ENCODE measurements at regions of chr10 and their contacts with region 1.

Region 1: DNA sequence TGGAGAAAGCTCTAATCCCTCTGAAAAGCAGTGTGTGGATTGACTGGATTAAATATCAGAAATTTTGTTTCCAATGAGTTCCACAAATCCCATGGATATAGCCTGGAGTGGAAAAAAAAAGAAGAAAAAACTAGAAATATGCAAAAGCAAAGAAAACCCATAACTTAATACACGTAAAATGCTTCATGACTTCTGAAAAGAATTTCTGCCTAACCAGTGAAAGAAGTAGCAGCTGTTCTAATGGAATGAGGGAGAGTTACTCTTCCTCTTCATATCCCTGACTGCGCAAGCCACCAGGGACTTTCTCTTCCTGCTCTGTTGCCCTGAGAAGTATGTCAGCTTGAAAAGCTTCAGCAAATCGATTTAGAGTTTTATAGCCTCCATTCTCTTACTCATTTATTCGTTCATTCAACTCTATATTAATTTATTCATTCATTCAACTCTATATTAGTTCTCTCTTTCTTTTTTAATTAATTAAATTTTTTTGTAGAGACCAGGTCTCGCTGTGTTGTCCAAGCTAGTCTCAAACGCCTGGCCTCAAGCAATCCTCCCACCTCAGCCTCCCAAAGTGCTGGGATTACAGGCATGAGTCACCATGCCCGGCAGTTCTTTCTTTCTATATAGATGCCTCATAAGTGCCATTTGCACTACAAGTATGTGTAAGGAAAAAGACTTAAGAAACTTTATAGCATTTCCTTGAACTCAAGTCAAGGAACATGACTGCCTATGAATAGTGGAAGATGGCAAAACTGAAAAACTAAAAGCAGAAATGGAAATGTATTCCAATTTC is 447.3 kb upstream of the NRP1 start:
- DNase-seq: no peak
- ATAC-seq: no peak
- H3K4me3 ChIP-seq: no peak overlapping the region
- H3K27ac ChIP-seq: no peak overlapping the region
- H3K4me1 ChIP-seq: no peaks in the 10 kb centered on the region
- H3K27me3 ChIP-seq: no peaks in the 10 kb centered on the region
- CTCF ChIP-seq: no peak
- EP300 ChIP-seq: no peak
- POLR2A ChIP-seq: no peak
- RAD21 ChIP-seq: no peak

Region 2: DNA sequence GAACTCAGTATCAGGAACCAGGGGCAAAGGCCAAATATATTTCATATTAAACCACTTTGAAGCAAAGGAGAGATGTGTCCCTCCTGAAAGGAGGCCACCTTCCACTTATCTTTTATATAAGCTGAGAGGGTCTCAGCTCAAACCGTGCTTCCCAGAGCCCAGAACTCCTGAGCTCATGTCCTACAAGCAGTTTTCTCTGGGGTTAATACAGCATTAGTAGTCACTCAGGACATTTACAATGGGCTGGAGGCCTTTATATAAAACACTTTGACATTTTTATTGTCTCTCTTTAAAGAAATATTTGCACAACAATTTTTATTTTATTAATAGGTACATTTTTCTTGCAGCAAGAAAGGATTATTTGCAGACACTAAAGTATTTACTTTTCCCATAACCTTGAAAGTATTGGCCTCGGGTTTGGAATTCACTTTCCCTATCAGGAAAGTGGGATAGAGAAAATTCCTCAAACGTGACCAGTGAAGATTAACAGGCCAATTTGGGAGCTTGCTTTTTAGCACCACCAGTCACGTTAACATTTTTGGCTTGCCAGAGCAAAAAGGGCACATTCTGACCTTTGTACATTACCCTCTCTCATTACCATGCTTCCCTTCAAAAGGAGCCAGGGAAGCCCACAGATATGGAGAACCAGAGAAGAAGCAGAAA is 17.6 kb after region 1 on chr10:
- CTCF ChIA-PET with region 1: interaction called, 4 read pairs
- POLR2A ChIA-PET with region 1: interaction called, 3 read pairs
- RAD21 ChIA-PET with region 1: interaction called, 6 read pairs
- SMC1A ChIA-PET with region 1: interaction called, 95 read pairs
- in situ Hi-C with region 1: no loop called
- intact Hi-C with region 1: no loop called
- DNase-seq: no peak
- ATAC-seq: no peak
- H3K4me3 ChIP-seq: no peak overlapping the region
- H3K27ac ChIP-seq: no peak overlapping the region
- H3K4me1 ChIP-seq: no peaks in the 10 kb centered on the region
- H3K27me3 ChIP-seq: no peaks in the 10 kb centered on the region
- CTCF ChIP-seq: no peak
- EP300 ChIP-seq: no peak
- POLR2A ChIP-seq: no peak
- RAD21 ChIP-seq: no peak

Region 3: DNA sequence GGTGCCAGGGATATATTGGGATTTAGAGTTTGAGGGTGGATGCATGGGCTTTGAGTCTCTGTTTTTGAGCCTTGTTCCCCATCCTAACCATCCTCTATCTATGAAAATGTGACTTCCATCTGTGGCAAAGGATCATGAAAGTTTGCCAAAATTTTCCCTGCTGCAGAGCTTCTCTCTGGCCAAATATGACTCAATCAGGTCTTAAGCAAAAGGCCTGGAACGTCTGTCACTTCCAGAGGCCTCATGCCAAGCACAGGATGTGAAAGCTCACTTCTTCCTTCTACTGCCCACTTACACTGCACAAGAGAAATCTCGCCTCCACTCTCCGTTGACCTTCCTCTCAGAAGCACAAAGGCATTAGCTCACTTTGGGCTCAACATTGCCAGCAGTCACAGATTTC is 249.6 kb after region 1 on chr10:
- CTCF ChIA-PET with region 1: no interaction called
- POLR2A ChIA-PET with region 1: no interaction called
- RAD21 ChIA-PET with region 1: no interaction called
- SMC1A ChIA-PET with region 1: no interaction called
- in situ Hi-C with region 1: no loop called
- intact Hi-C with region 1: no loop called
- DNase-seq: no peak
- ATAC-seq: no peak
- H3K4me3 ChIP-seq: no peak overlapping the region
- H3K27ac ChIP-seq: no peak overlapping the region
- H3K4me1 ChIP-seq: no peaks in the 10 kb centered on the region
- H3K27me3 ChIP-seq: no peaks in the 10 kb centered on the region
- CTCF ChIP-seq: no peak
- EP300 ChIP-seq: no peak
- POLR2A ChIP-seq: no peak
- RAD21 ChIP-seq: no peak